AG04450 (cell line): ENCODE measurements at regions of chr1 and their contacts with region 1.

Region 1: DNA sequence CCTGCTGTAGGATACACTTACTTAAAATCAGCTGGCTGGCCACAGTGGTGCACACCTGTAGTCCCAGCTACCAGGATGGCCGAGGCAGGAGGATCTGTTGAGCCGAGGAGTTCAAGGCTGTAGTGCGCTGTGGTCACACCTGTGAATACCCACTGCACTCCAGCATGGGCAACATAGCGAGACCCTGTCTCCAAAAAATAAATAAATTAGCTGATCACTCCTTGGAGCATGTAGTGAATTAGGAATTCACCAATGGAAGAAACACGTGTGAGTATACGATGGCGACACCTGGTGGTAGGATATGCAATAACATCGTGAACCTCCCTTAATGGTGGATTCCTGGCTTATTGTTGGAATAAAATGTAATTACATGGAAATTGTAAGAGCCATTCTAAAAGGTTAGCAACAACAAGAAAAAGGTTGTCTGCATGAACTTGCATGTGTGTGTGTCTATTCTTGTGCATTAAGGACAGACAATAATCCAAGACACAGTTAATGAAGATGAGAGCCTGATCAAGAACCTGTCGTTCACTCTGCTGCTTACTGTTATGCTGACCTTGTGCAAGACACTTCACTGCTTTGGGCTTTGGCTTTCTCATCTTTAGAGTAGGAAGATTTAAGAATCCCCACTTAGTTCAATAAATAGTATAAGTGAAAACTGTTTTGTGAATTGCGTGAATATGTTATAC is 38.6 kb upstream of the COX20 start:
- DNase-seq: peak; percentile 44
- H3K4me3 ChIP-seq: no peak overlapping the region
- H3K27ac ChIP-seq: no peak overlapping the region
- H3K27me3 ChIP-seq: no peaks in the 10 kb centered on the region
- CTCF ChIP-seq: peak; percentile 83

Region 2: DNA sequence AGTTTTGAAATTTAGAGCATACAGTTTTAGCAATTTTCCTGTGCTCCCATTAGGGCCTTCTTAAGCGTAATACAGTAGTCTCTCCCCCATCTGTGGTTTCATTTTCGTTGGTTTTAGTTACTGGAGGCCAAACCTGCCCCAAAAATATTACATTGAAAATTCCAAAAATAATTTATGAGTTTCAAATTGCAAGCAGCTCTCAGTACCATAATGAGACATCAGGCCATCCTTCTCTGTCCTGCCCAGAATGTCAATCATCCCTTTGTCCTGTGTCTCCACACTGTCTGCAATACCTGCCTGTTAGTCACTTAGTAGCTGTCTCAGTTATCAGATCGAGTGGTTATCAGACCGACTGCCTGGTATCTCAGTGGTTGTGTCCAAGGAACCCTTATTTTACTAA is 390.5 kb before region 1 on chr1:
- CTCF ChIA-PET with region 1: no interaction called
- POLR2A ChIA-PET with region 1: no interaction called
- DNase-seq: no peak
- H3K4me3 ChIP-seq: no peak overlapping the region
- H3K27ac ChIP-seq: no peak overlapping the region
- H3K27me3 ChIP-seq: no peaks in the 10 kb centered on the region
- CTCF ChIP-seq: no peak

Region 3: DNA sequence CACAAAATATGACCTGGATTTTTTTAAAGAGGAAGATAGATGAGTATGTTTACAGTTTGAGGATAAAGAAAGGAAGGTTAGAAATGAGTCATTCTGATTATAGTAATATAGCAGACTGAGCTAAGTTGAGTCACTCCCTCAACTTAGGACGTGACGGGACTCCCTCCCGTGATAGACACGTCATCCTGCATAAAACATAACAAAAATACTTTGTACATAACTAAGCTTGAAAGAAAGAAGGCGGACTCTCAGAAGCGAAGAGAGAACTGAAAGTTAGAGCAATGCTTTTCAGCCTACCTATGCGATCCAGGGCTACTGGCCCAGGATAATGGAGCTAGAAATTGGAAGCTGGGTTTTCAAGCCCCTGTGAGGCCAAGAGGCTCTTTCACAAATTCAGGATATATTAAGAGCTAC is 196.9 kb before region 1 on chr1:
- CTCF ChIA-PET with region 1: interaction called, 160 read pairs
- POLR2A ChIA-PET with region 1: interaction called, 4 read pairs
- DNase-seq: peak; percentile 89
- H3K4me3 ChIP-seq: peak overlapping the region; percentile 55
- H3K27ac ChIP-seq: peak overlapping the region; percentile 94
- H3K27me3 ChIP-seq: no peaks in the 10 kb centered on the region
- CTCF ChIP-seq: no peak

Region 4: GRCh38 chr1:244778361-244778760 is 18.5 kb before region 1 on chr1:
- CTCF ChIA-PET with region 1: interaction called, 10 read pairs
- POLR2A ChIA-PET with region 1: no interaction called
- DNase-seq: peak; percentile 62
- H3K4me3 ChIP-seq: no peak overlapping the region
- H3K27ac ChIP-seq: no peak overlapping the region
- H3K27me3 ChIP-seq: no peaks in the 10 kb centered on the region
- CTCF ChIP-seq: no peak

Region 5: DNA sequence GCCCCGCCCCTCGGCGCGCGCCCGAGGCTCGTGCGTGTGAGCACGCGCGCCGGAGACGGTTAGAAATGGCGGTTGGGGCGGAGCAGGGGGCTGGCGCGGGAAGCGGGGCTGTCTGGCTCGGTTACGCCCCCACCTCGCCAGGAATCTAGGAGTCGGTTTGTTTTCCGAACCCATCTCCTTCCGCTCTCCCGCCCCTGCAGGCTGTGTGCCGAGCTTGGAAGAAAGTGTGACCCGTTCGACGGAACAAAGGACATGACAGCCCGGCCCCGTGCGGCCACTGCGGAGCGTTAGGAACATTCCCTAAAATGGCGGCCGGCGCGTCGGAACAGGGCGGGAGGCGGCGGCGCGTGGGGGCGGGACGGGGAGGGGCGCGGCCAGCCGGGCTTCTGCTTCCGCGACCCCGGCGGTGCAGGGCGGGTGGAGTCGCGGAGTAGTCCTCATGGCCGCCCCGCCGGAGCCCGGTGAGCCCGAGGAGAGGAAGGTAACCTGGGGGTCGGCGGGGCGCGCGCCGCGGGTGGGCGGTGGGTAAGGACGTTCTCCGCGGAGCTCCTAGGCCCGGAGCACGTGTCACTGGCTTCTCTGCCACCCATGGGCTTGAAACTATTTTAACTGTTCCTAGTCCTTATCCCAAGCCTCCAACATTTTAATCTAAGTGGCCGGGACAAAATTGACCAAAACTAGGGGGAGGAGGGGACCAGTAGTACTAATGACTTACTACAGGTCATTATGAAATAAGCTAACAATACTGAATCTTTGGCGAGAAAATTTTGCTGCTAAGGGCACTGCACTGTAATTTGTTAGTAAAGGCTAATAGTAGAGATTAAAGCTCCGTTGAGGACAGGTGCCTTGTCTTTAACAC is 38.6 kb after region 1 on chr1 and contains the start of gene COX20:
- CTCF ChIA-PET with region 1: interaction called, 10 read pairs
- POLR2A ChIA-PET with region 1: no interaction called
- DNase-seq: peak; percentile 72
- H3K4me3 ChIP-seq: peak within 1 kb of the TSS; percentile 65
- H3K27ac ChIP-seq: peak within 1 kb of the TSS; percentile 99
- H3K27me3 ChIP-seq: no peaks in the 10 kb centered on the region
- CTCF ChIP-seq: no peak
- polyA plus RNA-seq, gene COX20: 25.4 and 45.8 TPM in 2 replicates